CD4-positive, alpha-beta memory T cell (primary cell): ENCODE measurements at regions of chr19 and their contacts with region 1.

Region 1: GRCh38 chr19:55141696-55142095 is 7.3 kb downstream of the TNNT1 start:
- DNase-seq: no peak
- H3K4me3 ChIP-seq: no peak overlapping the region
- H3K4me3 Mint-ChIP-seq: no peak overlapping the region
- H3K27ac ChIP-seq: no peak overlapping the region
- H3K27ac Mint-ChIP-seq: no peak overlapping the region
- H3K4me1 ChIP-seq: peaks cover 3% of the 10 kb centered on the region
- H3K4me1 Mint-ChIP-seq: peaks cover 3 to 6% (median 4%) of the 10 kb centered on the region in 4 donors
- H3K27me3 ChIP-seq: peaks cover 18% of the 10 kb centered on the region
- H3K27me3 Mint-ChIP-seq: peaks cover 34% of the 10 kb centered on the region in 2 donors

Region 2: GRCh38 chr19:55062734-55063492 is 78.8 kb before region 1 on chr19 and contains the start of gene RDH13:
- CTCF ChIA-PET with region 1: no interaction called
- POLR2A ChIA-PET with region 1: no interaction called
- intact Hi-C with region 1: no loop called
- DNase-seq: peak; percentile 94 to 97 (median 97)
- H3K4me3 ChIP-seq: peak within 1 kb of the TSS; percentile 23 to 84
- H3K4me3 Mint-ChIP-seq: peak within 1 kb of the TSS; percentile 84 to 90 (median 87)
- H3K27ac ChIP-seq: peak within 1 kb of the TSS; percentile 62
- H3K27ac Mint-ChIP-seq: peak within 1 kb of the TSS; percentile 47 to 90 (median 84)
- H3K4me1 ChIP-seq: peaks cover 15% of the 10 kb centered on the region
- H3K4me1 Mint-ChIP-seq: peaks cover 8 to 21% (median 11%) of the 10 kb centered on the region in 4 donors
- H3K27me3 ChIP-seq: no peaks in the 10 kb centered on the region
- H3K27me3 Mint-ChIP-seq: peaks cover 15 to 23% of the 10 kb centered on the region in 2 donors
- total RNA-seq, gene RDH13: 23.9 to 27.4 TPM

Region 3: GRCh38 chr19:55088543-55089341 is 53.0 kb before region 1 on chr19:
- CTCF ChIA-PET with region 1: no interaction called
- POLR2A ChIA-PET with region 1: no interaction called
- intact Hi-C with region 1: no loop called
- DNase-seq: peak; percentile 56 to 71 (median 59)
- H3K4me3 ChIP-seq: no peak overlapping the region
- H3K4me3 Mint-ChIP-seq: peak overlapping the region; percentile 18 to 89 (median 68)
- H3K27ac ChIP-seq: no peak overlapping the region
- H3K27ac Mint-ChIP-seq: peak overlapping the region in 2 of 7 donors; percentile 68 to 71
- H3K4me1 ChIP-seq: peaks cover 22% of the 10 kb centered on the region
- H3K4me1 Mint-ChIP-seq: peaks cover 12 to 35% (median 18%) of the 10 kb centered on the region in 4 donors
- H3K27me3 ChIP-seq: peaks cover 12% of the 10 kb centered on the region
- H3K27me3 Mint-ChIP-seq: peaks cover 23 to 41% of the 10 kb centered on the region in 2 donors

Region 4: GRCh38 chr19:55099533-55100506 is 41.9 kb before region 1 on chr19:
- CTCF ChIA-PET with region 1: no interaction called
- POLR2A ChIA-PET with region 1: no interaction called
- intact Hi-C with region 1: no loop called
- DNase-seq: no peak
- H3K4me3 ChIP-seq: no peak overlapping the region
- H3K4me3 Mint-ChIP-seq: no peak overlapping the region
- H3K27ac ChIP-seq: no peak overlapping the region
- H3K27ac Mint-ChIP-seq: no peak overlapping the region
- H3K4me1 ChIP-seq: no peaks in the 10 kb centered on the region
- H3K4me1 Mint-ChIP-seq: peaks cover 0 to 2% (median 0%) of the 10 kb centered on the region in 4 donors
- H3K27me3 ChIP-seq: no peaks in the 10 kb centered on the region
- H3K27me3 Mint-ChIP-seq: no peaks in the 10 kb centered on the region

Region 5: DNA sequence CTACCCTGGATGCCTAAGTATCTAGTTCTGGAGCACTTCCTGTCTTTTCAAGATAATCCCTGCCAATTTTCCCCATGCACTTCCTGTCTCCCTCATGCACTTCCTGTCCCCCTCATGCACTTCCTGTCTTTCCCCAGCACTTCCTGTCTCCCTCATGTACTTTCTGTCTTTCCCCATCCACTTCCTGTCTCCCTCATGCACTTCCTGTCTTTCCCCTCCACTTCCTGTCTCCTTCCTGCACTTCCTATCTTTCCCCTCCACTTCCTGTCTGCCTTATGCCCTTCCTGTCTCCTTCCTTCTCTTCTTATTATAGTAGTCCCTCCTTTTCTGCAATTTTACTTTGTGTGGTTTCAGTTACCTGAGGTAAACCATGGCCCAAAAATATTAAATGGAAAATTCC is 10.3 kb after region 1 on chr19:
- CTCF ChIA-PET with region 1: interaction called, 13 read pairs
- POLR2A ChIA-PET with region 1: interaction called, 3 read pairs
- intact Hi-C with region 1: no loop called
- DNase-seq: no peak
- H3K4me3 ChIP-seq: no peak overlapping the region
- H3K4me3 Mint-ChIP-seq: peak overlapping the region in 2 of 8 donors; percentile 29 to 45
- H3K27ac ChIP-seq: no peak overlapping the region
- H3K27ac Mint-ChIP-seq: peak overlapping the region; percentile 51 to 90 (median 79)
- H3K4me1 ChIP-seq: peaks cover 13% of the 10 kb centered on the region
- H3K4me1 Mint-ChIP-seq: peaks cover 16 to 35% (median 23%) of the 10 kb centered on the region in 4 donors
- H3K27me3 ChIP-seq: peaks cover 6% of the 10 kb centered on the region
- H3K27me3 Mint-ChIP-seq: peaks cover 13 to 22% of the 10 kb centered on the region in 2 donors

Region 6: DNA sequence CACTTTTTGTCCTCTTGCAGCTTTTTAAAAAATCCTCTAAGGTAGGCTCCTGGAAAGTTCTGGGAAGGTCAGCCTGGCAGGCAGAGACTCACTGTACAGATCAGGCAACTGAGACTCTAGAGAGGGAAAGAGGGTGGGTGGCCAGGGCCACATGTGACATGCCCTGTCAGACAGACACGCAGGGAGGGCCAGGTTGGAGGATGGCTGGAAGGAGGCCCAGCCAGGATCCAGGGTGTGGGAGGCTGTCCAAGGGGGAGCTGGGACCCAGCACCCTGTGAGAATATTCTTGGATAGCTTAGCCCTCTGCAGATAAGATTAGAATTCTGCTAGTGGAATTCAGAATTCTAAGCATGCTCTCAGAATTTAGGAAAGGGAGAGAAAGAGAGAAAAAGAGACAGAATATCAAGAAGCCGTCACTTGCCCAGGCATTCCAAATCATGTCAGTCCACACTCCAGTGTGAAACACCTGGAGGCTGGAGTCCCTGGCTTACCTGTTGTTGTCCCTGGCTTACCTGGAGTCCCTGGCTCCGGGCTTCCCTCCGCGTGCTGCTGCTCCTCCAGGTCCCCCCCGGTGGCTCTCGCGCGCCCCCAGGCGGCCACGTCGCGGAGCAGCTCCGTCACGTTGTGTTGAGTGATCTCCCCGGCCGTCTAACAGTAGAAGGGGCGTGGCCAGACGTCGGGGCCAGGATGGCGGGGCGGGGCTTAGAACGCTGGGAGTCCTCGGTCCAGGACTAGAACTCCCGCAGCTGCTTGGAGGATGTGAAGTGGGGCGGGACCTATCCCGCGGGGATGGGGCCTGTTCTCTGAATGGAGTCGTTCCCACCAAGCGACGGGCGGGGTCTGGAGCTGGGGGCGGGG is 18.7 kb after region 1 on chr19:
- CTCF ChIA-PET with region 1: interaction called, 16 read pairs
- POLR2A ChIA-PET with region 1: no interaction called
- intact Hi-C with region 1: loop called (anchors 1 kb)
- DNase-seq: peak; percentile 82 to 87 (median 85)
- H3K4me3 ChIP-seq: no peak overlapping the region
- H3K4me3 Mint-ChIP-seq: peak overlapping the region in 1 of 8 donors; percentile 26
- H3K27ac ChIP-seq: no peak overlapping the region
- H3K27ac Mint-ChIP-seq: peak overlapping the region in 5 of 7 donors; percentile 36 to 75 (median 46)
- H3K4me1 ChIP-seq: peaks cover 9% of the 10 kb centered on the region
- H3K4me1 Mint-ChIP-seq: peaks cover 3 to 10% (median 7%) of the 10 kb centered on the region in 4 donors
- H3K27me3 ChIP-seq: peaks cover 6% of the 10 kb centered on the region
- H3K27me3 Mint-ChIP-seq: peaks cover 24 to 36% of the 10 kb centered on the region in 2 donors

Region 7: DNA sequence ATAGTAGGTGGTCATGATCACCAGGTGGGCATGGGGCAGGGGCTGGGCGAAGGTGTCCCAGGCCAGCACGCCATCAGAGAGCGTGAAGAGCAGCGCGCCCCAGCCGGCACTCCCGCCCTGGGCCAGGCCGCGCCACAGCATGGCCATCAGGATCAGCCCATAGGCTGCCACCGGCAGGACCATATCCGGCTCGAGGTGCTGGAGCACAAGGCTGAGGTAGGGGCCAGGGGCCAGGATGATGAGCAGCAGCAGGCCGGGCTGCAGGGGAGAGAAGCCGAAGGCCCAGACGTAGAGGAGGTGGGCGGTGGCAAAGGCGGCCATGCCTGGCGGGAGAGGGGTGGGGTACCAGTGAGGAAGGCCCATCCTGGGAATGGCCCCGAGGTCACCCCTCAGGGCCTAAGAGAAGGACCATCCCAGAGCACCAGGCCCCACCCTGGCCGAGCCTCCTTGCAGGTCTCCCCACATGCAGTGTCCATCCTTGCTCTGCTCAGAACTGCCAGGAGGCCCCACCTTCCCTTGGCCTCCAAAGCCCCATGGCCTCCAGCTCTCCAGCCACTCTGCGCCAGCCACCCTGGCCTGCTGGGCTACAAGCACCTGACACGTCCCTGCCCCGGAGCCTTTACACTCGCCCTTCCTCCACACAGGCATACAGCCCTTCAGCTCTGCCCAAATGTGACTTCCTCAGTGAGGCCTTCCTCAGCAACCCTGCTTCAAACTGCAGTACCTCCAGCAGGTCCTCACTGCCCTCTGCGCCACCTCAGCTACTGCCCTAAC is 85.7 kb after region 1 on chr19:
- CTCF ChIA-PET with region 1: no interaction called
- POLR2A ChIA-PET with region 1: no interaction called
- intact Hi-C with region 1: no loop called
- DNase-seq: no peak
- H3K4me3 ChIP-seq: no peak overlapping the region
- H3K4me3 Mint-ChIP-seq: no peak overlapping the region
- H3K27ac ChIP-seq: no peak overlapping the region
- H3K27ac Mint-ChIP-seq: peak overlapping the region in 2 of 7 donors; percentile 29
- H3K4me1 ChIP-seq: no peaks in the 10 kb centered on the region
- H3K4me1 Mint-ChIP-seq: peaks cover 0 to 3% (median 1%) of the 10 kb centered on the region in 4 donors
- H3K27me3 ChIP-seq: no peaks in the 10 kb centered on the region
- H3K27me3 Mint-ChIP-seq: no peaks in the 10 kb centered on the region

Region 8: GRCh38 chr19:55418185-55418584 is 276.5 kb after region 1 on chr19:
- CTCF ChIA-PET with region 1: interaction called, 41 read pairs
- POLR2A ChIA-PET with region 1: no interaction called
- intact Hi-C with region 1: no loop called
- DNase-seq: peak; percentile 54 to 61 (median 60)
- H3K4me3 ChIP-seq: no peak overlapping the region
- H3K4me3 Mint-ChIP-seq: no peak overlapping the region
- H3K27ac ChIP-seq: no peak overlapping the region
- H3K27ac Mint-ChIP-seq: peak overlapping the region in 3 of 7 donors; percentile 48 to 74 (median 68)
- H3K4me1 ChIP-seq: peaks cover 25% of the 10 kb centered on the region
- H3K4me1 Mint-ChIP-seq: peaks cover 9 to 29% (median 20%) of the 10 kb centered on the region in 4 donors
- H3K27me3 ChIP-seq: no peaks in the 10 kb centered on the region
- H3K27me3 Mint-ChIP-seq: peaks cover 0 to 3% of the 10 kb centered on the region in 2 donors

Region 9: GRCh38 chr19:55452749-55453346 is 311.2 kb after region 1 on chr19:
- CTCF ChIA-PET with region 1: interaction called, 10 read pairs
- POLR2A ChIA-PET with region 1: no interaction called
- intact Hi-C with region 1: loop called (anchors 1 kb)
- DNase-seq: peak in 3 of 5 donors; percentile 23 to 59 (median 32)
- H3K4me3 ChIP-seq: no peak overlapping the region
- H3K4me3 Mint-ChIP-seq: peak overlapping the region in 3 of 8 donors; percentile 56 to 78 (median 75)
- H3K27ac ChIP-seq: no peak overlapping the region
- H3K27ac Mint-ChIP-seq: no peak overlapping the region
- H3K4me1 ChIP-seq: peaks cover 10% of the 10 kb centered on the region
- H3K4me1 Mint-ChIP-seq: peaks cover 5 to 20% (median 15%) of the 10 kb centered on the region in 4 donors
- H3K27me3 ChIP-seq: no peaks in the 10 kb centered on the region
- H3K27me3 Mint-ChIP-seq: peaks cover 12 to 18% of the 10 kb centered on the region in 2 donors